Heart right ventricle (tissue), 16 donors: ENCODE measurements at regions of chr4 and their contacts with region 1.

Region 1: GRCh38 chr4:133596459-133596858 is 447.4 kb downstream of the PCDH10 start:
- DNase-seq: no peak
- ATAC-seq: no peak
- H3K4me3 ChIP-seq: no peak overlapping the region
- H3K27ac ChIP-seq: no peak overlapping the region
- H3K4me1 ChIP-seq: no peaks in the 10 kb centered on the region
- H3K27me3 ChIP-seq: no peaks in the 10 kb centered on the region
- CTCF ChIP-seq: no peak

Region 2: GRCh38 chr4:133618963-133619362 is 22.5 kb after region 1 on chr4:
- intact Hi-C with region 1: loop called in 1 of 10 experiments (anchors 2 kb)
- DNase-seq: no peak
- ATAC-seq: no peak
- H3K4me3 ChIP-seq: no peak overlapping the region
- H3K27ac ChIP-seq: no peak overlapping the region
- H3K4me1 ChIP-seq: no peaks in the 10 kb centered on the region
- H3K27me3 ChIP-seq: no peaks in the 10 kb centered on the region
- CTCF ChIP-seq: no peak

Region 3: GRCh38 chr4:133638751-133639150 is 42.3 kb after region 1 on chr4:
- intact Hi-C with region 1: no loop called
- DNase-seq: no peak
- ATAC-seq: no peak
- H3K4me3 ChIP-seq: no peak overlapping the region
- H3K27ac ChIP-seq: no peak overlapping the region
- H3K4me1 ChIP-seq: no peaks in the 10 kb centered on the region
- H3K27me3 ChIP-seq: no peaks in the 10 kb centered on the region
- CTCF ChIP-seq: no peak